ENCODE measurements at regions of chr14 and their contacts with region 1.

Region 1: GRCh38 chr14:92783816-92784431 is 10.2 kb upstream of the GOLGA5 start:
- DNase-seq: peak; percentile 37 to 61 (median 52)
- H3K4me3 ChIP-seq: no peak overlapping the region
- H3K4me3 Mint-ChIP-seq: no peak overlapping the region
- H3K27ac ChIP-seq: no peak overlapping the region
- H3K27ac Mint-ChIP-seq: no peak overlapping the region
- H3K4me1 ChIP-seq: peaks cover 13 to 45% of the 10 kb centered on the region in 2 donors
- H3K4me1 Mint-ChIP-seq: peaks cover 40% of the 10 kb centered on the region
- H3K27me3 ChIP-seq: no peaks in the 10 kb centered on the region
- H3K27me3 Mint-ChIP-seq: peaks cover 0 to 4% (median 2%) of the 10 kb centered on the region in 3 donors
- CTCF ChIP-seq: peak; percentile 75

Region 2: DNA sequence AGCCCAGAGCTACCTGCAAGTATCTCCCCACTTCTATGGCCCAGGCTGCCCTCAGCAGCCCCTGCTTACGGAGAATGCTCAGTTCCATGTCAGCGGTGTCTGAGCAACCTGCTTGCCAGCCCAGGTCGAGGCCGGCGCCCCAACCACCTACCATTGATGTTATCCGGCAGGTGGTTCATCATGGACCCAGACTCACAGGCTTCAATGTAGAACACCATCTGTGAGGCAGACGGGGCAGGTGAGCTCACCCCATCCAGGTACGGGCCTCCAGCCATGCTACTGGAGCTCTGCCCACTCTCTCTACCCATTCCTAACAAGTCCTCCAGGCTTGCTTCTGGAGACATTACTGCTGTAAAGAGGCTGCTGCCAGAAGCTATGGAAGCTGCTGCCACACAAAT is 71.3 kb before region 1 on chr14:
- intact Hi-C with region 1: loop called (anchors 2 to 5 kb)
- DNase-seq: no peak
- H3K4me3 ChIP-seq: no peak overlapping the region
- H3K4me3 Mint-ChIP-seq: no peak overlapping the region
- H3K27ac ChIP-seq: no peak overlapping the region
- H3K27ac Mint-ChIP-seq: no peak overlapping the region
- H3K4me1 ChIP-seq: no peaks in the 10 kb centered on the region
- H3K4me1 Mint-ChIP-seq: peaks cover 4% of the 10 kb centered on the region
- H3K27me3 ChIP-seq: no peaks in the 10 kb centered on the region
- H3K27me3 Mint-ChIP-seq: peaks cover 2 to 4% (median 4%) of the 10 kb centered on the region in 3 donors
- CTCF ChIP-seq: no peak

Region 3: GRCh38 chr14:92719890-92720323 is 64.0 kb before region 1 on chr14:
- intact Hi-C with region 1: loop called in 1 of 2 experiments (anchors 2 kb)
- DNase-seq: no peak
- H3K4me3 ChIP-seq: no peak overlapping the region
- H3K4me3 Mint-ChIP-seq: no peak overlapping the region
- H3K27ac ChIP-seq: no peak overlapping the region
- H3K27ac Mint-ChIP-seq: no peak overlapping the region
- H3K4me1 ChIP-seq: peaks cover 12 to 15% of the 10 kb centered on the region in 2 donors
- H3K4me1 Mint-ChIP-seq: peaks cover 18% of the 10 kb centered on the region
- H3K27me3 ChIP-seq: no peaks in the 10 kb centered on the region
- H3K27me3 Mint-ChIP-seq: peaks cover 2 to 6% (median 3%) of the 10 kb centered on the region in 3 donors
- CTCF ChIP-seq: no peak

Region 4: DNA sequence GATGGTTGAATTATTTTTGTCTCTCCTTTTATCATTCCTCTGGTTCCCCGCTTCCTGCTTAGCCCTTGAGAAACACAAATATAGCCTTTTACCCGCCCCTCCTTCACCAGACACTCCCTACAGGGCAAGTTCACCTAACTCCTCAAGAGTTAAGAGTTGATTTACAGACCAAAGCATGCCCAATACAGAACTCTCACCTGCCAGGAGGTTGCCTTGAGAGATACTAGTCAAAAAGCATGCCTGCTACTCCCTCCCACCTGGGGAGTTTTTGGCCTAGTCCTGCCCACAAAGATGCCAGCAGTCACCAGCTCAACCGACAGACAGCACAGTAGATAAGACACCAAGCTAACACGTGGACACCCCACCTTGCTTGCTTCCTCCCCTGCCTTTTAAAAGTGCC is 46.7 kb before region 1 on chr14:
- intact Hi-C with region 1: no loop called
- DNase-seq: no peak
- H3K4me3 ChIP-seq: no peak overlapping the region
- H3K4me3 Mint-ChIP-seq: no peak overlapping the region
- H3K27ac ChIP-seq: no peak overlapping the region
- H3K27ac Mint-ChIP-seq: no peak overlapping the region
- H3K4me1 ChIP-seq: no peaks in the 10 kb centered on the region
- H3K4me1 Mint-ChIP-seq: no peaks in the 10 kb centered on the region
- H3K27me3 ChIP-seq: peaks cover 0 to 7% of the 10 kb centered on the region in 2 donors
- H3K27me3 Mint-ChIP-seq: peaks cover 0 to 44% (median 35%) of the 10 kb centered on the region in 3 donors
- CTCF ChIP-seq: no peak

Region 5: GRCh38 chr14:92748259-92749016 is 35.5 kb before region 1 on chr14 and contains the start of gene LGMN:
- intact Hi-C with region 1: loop called in 1 of 2 experiments (anchors 5 kb)
- DNase-seq: peak; percentile 69 to 80 (median 77)
- H3K4me3 ChIP-seq: peak within 1 kb of the TSS; percentile 23 to 73 (median 31)
- H3K4me3 Mint-ChIP-seq: peak within 1 kb of the TSS; percentile 83 to 90
- H3K27ac ChIP-seq: no peak within 1 kb of the TSS
- H3K27ac Mint-ChIP-seq: peak within 1 kb of the TSS in 6 of 7 donors; percentile 26 to 81 (median 59)
- H3K4me1 ChIP-seq: peaks cover 18 to 29% of the 10 kb centered on the region in 2 donors
- H3K4me1 Mint-ChIP-seq: peaks cover 37% of the 10 kb centered on the region
- H3K27me3 ChIP-seq: peaks cover 37 to 61% of the 10 kb centered on the region in 2 donors
- H3K27me3 Mint-ChIP-seq: peaks cover 55 to 73% (median 59%) of the 10 kb centered on the region in 3 donors
- CTCF ChIP-seq: no peak
- polyA plus RNA-seq, gene LGMN: 1.7 to 3.3 (median 2.9) TPM